ENCODE measurements at regions of chr12 and their contacts with region 1.

Region 1: GRCh38 chr12:32051559-32052414 is 54.9 kb upstream of the BICD1 start:
- DNase-seq: peak; percentile 87
- H3K4me3 ChIP-seq: no peak overlapping the region
- H3K27ac ChIP-seq: no peak overlapping the region
- H3K27me3 ChIP-seq: no peaks in the 10 kb centered on the region
- CTCF ChIP-seq: no peak

Region 2: GRCh38 chr12:31931796-31932715 is 119.7 kb before region 1 on chr12:
- in situ Hi-C with region 1: no loop called
- DNase-seq: no peak
- H3K4me3 ChIP-seq: no peak overlapping the region
- H3K27ac ChIP-seq: no peak overlapping the region
- H3K27me3 ChIP-seq: no peaks in the 10 kb centered on the region
- CTCF ChIP-seq: no peak

Region 3: GRCh38 chr12:32240831-32241230 is 189.0 kb after region 1 on chr12:
- in situ Hi-C with region 1: no loop called
- DNase-seq: peak; percentile 11
- H3K4me3 ChIP-seq: no peak overlapping the region
- H3K27ac ChIP-seq: no peak overlapping the region
- H3K27me3 ChIP-seq: no peaks in the 10 kb centered on the region
- CTCF ChIP-seq: no peak

Region 4: DNA sequence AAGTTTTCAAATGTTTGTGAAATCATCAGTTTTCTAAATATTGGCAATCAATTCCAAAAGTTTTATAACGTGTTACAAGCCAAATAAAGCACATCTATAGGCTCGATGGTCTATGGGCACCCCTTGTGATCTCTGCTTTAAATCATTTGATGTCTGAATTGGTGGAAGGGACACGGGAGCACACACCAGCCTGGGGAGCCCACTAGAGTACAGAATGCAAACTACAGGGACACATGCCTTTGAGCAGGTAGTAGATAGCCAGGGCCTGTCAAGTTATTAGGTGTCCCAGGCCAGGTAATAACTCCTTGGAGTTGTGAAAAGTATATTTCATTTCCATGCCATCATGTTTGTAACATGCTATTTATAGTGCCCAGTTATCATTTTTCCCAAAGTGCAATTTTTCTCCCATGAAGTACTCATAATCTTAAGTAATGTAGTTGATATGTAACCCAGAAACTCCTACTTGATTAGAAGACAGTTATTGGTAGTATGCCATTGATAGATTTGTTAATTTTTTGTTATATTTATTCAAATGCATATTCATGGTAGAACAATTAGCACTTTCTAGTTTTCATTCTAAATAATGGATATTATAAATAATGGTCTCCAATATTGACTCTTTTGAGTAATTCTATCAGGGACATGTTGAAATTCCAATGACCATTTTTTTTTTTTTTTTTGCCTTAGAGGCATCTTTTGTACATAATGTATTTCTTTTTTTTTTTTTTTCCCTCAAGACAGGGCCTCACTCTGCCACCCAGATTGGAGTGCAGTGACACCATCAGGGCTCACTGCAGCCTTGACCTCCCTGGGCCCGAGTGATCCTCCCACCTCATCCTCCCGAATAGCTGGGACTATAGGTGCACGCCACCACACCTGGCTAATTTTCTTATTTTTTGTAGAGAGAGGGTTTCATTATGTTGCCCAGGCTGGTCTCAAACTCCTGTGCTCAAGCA is 250.7 kb after region 1 on chr12:
- in situ Hi-C with region 1: loop called (anchors 25 kb)
- DNase-seq: no peak
- H3K4me3 ChIP-seq: no peak overlapping the region
- H3K27ac ChIP-seq: no peak overlapping the region
- H3K27me3 ChIP-seq: no peaks in the 10 kb centered on the region
- CTCF ChIP-seq: peak; percentile 74